ENCODE measurements at regions of chr20 and their contacts with region 1.

Region 1: GRCh38 chr20:31514159-31515071 is at the start of gene HM13:
- DNase-seq: peak; percentile 90
- H3K4me3 Mint-ChIP-seq: no peak within 1 kb of the TSS
- H3K27ac Mint-ChIP-seq: peak within 1 kb of the TSS; percentile 68
- H3K4me1 Mint-ChIP-seq: peaks cover 10% of the 10 kb centered on the region
- H3K27me3 Mint-ChIP-seq: peaks cover 2% of the 10 kb centered on the region
- total RNA-seq, gene HM13: 137 to 146 TPM

Region 2: DNA sequence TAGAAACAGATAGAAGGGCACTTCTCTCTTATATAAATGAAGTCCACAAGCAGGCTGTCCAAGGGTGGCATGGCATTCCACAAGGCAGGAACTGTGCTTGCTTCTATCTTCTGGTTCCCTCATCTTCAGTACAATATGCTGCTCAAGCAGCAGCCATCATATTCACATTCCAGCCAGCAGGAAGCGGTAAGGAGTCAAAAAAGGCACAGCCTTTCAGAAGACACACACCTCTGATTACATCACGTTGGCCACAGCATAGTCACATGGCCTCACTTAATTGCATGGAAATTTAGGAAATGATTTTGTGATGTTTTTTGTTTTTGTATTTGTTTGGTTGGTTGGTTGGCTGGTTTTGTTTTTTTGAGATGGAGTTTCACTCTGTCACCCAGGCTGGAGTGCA is 20.3 kb before region 1 on chr20:
- CTCF ChIA-PET with region 1: no interaction called
- POLR2A ChIA-PET with region 1: no interaction called
- DNase-seq: no peak
- H3K4me3 Mint-ChIP-seq: no peak overlapping the region
- H3K27ac Mint-ChIP-seq: no peak overlapping the region
- H3K4me1 Mint-ChIP-seq: no peaks in the 10 kb centered on the region
- H3K27me3 Mint-ChIP-seq: peaks cover 9% of the 10 kb centered on the region

Region 3: GRCh38 chr20:31572701-31573554 is 58.5 kb after region 1 on chr20:
- CTCF ChIA-PET with region 1: no interaction called
- POLR2A ChIA-PET with region 1: no interaction called
- DNase-seq: peak; percentile 88
- H3K4me3 Mint-ChIP-seq: peak overlapping the region; percentile 86
- H3K27ac Mint-ChIP-seq: peak overlapping the region; percentile 91
- H3K4me1 Mint-ChIP-seq: peaks cover 27% of the 10 kb centered on the region
- H3K27me3 Mint-ChIP-seq: no peaks in the 10 kb centered on the region

Region 4: GRCh38 chr20:31674895-31675827 is 160.7 kb after region 1 on chr20:
- CTCF ChIA-PET with region 1: no interaction called
- POLR2A ChIA-PET with region 1: interaction called, 10 read pairs
- DNase-seq: peak; percentile 81
- H3K4me3 Mint-ChIP-seq: peak overlapping the region; percentile 80
- H3K27ac Mint-ChIP-seq: peak overlapping the region; percentile 99
- H3K4me1 Mint-ChIP-seq: peaks cover 82% of the 10 kb centered on the region
- H3K27me3 Mint-ChIP-seq: no peaks in the 10 kb centered on the region

Measured in activated CD4-positive, alpha-beta T cell treated with anti-CD3 and anti-CD28 coated beads, Interleukin-2, amount 10 ng/mL, durations not matched to agents 7 days and 5 days (primary cell).